A549 (cell line): ENCODE measurements at regions of chr16 and their contacts with region 1.

Region 1: GRCh38 chr16:25224731-25225319 is 8.1 kb downstream of the AQP8 start:
- DNase-seq: no peak
- ATAC-seq: no peak; a peak in 1 of 6 replicates
- H3K4me3 ChIP-seq: no peak overlapping the region
- H3K27ac ChIP-seq: no peak overlapping the region
- H3K4me1 ChIP-seq: no peaks in the 10 kb centered on the region
- CTCF ChIP-seq: no peak
- EP300 ChIP-seq: no peak
- POLR2A ChIP-seq: no peak
- RAD21 ChIP-seq: no peak

Region 2: DNA sequence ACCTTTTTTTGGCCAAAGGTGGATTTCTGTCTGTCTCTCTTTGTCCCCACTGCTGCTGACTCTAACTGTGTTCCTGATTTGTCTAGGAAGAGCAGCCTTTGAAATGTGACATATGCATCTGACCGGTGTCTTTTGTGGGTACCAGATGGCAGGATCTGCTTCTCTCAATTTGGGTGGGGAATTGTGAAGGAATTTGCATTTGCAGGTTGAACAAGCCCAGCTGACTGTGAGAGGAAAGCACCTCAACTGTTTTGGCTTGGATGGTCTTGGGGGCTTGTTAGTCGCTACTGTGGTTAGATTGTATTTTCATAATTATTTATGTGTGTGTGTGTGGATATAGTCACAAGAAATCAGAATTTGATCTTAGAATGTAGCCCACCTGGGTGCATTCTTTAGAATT is 151.0 kb before region 1 on chr16:
- CTCF ChIA-PET with region 1: no interaction called
- POLR2A ChIA-PET with region 1: no interaction called
- DNase-seq: no peak
- ATAC-seq: no peak
- H3K4me3 ChIP-seq: no peak overlapping the region
- H3K27ac ChIP-seq: no peak overlapping the region
- H3K4me1 ChIP-seq: no peaks in the 10 kb centered on the region
- CTCF ChIP-seq: no peak
- EP300 ChIP-seq: no peak
- POLR2A ChIP-seq: no peak
- RAD21 ChIP-seq: no peak

Region 3: DNA sequence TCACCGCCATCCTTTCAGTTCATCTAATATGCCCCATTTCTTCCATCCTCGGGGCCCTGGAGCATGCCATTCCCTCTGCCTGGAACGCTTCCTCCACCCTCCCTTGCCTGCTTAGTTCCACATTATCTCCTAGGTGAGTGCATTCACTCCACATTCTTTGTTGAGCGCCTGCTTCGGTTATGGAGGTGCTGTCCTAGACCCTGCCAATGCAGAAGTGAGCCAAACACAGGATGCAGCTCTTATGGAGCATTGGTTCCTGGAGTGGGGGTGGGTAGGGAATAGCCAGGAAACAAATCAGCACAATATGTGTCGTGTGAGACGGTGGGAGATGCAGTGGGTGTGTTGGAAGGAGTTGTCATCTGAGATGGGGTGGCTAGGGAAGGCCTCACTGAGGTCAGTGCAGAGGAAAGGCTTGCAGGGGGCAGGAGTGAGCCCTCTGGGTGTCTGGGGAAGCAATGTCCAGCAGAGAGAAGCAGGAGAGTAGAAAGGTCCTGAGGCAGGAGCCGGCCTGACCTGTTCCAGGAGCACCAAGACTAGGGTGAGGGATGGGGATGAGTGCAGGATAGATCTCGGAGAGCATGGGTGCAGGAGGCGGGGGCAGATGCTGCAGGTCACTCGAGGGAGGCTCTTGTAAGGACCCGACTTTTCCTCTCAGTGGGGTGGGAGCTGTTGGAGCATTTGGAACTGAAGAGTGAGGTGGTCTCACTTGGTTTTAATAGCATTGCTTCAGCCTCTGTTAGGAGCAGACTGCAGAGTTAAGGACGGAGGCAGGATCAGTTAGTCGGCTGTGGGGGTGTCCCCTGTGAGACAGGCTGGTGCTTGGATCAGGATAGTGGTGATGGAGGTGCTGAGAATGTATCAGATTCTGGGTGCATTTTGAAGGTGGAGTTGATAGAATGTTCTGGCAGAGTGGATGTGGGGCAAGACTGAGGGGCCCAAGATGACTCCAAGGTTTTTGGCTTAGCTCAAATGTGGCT is 106.3 kb before region 1 on chr16:
- CTCF ChIA-PET with region 1: interaction called, 10 read pairs
- POLR2A ChIA-PET with region 1: no interaction called
- DNase-seq: no peak
- ATAC-seq: no peak
- H3K4me3 ChIP-seq: no peak overlapping the region
- H3K27ac ChIP-seq: no peak overlapping the region
- H3K4me1 ChIP-seq: no peaks in the 10 kb centered on the region
- CTCF ChIP-seq: no peak
- EP300 ChIP-seq: no peak
- POLR2A ChIP-seq: no peak
- RAD21 ChIP-seq: no peak

Region 4: DNA sequence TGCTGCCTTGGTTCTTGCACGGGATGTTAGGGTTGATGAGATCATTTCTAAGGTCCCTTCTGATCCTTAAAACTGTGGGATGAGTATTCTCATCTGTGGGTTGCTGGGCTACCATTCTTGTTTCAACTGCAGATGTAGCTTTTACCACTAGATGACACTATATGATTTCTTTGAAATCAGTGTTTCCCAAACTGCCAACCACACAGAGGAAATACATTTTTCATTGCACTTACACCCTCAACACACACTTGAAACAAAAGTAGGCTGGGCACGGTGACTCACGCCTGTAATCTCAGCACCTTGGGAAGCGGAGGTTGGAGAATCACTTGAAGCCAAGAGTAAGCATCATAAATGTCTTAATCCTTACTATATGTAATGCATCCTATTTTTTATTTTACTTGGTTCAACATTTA is 98.0 kb before region 1 on chr16:
- CTCF ChIA-PET with region 1: interaction called, 30 read pairs
- POLR2A ChIA-PET with region 1: no interaction called
- DNase-seq: peak; percentile 60 to 65
- ATAC-seq: peak; percentile 84 to 92
- H3K4me3 ChIP-seq: no peak overlapping the region
- H3K27ac ChIP-seq: no peak overlapping the region
- H3K4me1 ChIP-seq: peaks cover 4% of the 10 kb centered on the region; the same call in 1 of the 3 replicates
- CTCF ChIP-seq: peak; percentile 73
- EP300 ChIP-seq: no peak
- POLR2A ChIP-seq: no peak
- RAD21 ChIP-seq: peak; percentile 71 to 83

Region 5: GRCh38 chr16:25138134-25138533 is 86.7 kb before region 1 on chr16:
- CTCF ChIA-PET with region 1: interaction called, 11 read pairs
- POLR2A ChIA-PET with region 1: no interaction called
- DNase-seq: no peak
- ATAC-seq: peak; percentile 49 to 59; a peak in 4 of 6 replicates
- H3K4me3 ChIP-seq: no peak overlapping the region
- H3K27ac ChIP-seq: no peak overlapping the region
- H3K4me1 ChIP-seq: no peaks in the 10 kb centered on the region
- CTCF ChIP-seq: no peak
- EP300 ChIP-seq: no peak
- POLR2A ChIP-seq: no peak
- RAD21 ChIP-seq: no peak

Region 6: GRCh38 chr16:25213709-25214397 is 11.0 kb before region 1 on chr16:
- CTCF ChIA-PET with region 1: interaction called, 11 read pairs
- POLR2A ChIA-PET with region 1: no interaction called
- DNase-seq: no peak
- ATAC-seq: no peak
- H3K4me3 ChIP-seq: no peak overlapping the region
- H3K27ac ChIP-seq: no peak overlapping the region
- H3K4me1 ChIP-seq: no peaks in the 10 kb centered on the region
- CTCF ChIP-seq: no peak
- EP300 ChIP-seq: no peak
- POLR2A ChIP-seq: no peak
- RAD21 ChIP-seq: no peak

Region 7: GRCh38 chr16:25235991-25236390 is 11.2 kb after region 1 on chr16:
- CTCF ChIA-PET with region 1: interaction called, 39 read pairs
- POLR2A ChIA-PET with region 1: no interaction called
- DNase-seq: no peak
- ATAC-seq: no peak
- H3K4me3 ChIP-seq: no peak overlapping the region
- H3K27ac ChIP-seq: no peak overlapping the region
- H3K4me1 ChIP-seq: no peaks in the 10 kb centered on the region
- CTCF ChIP-seq: no peak
- EP300 ChIP-seq: no peak
- POLR2A ChIP-seq: no peak
- RAD21 ChIP-seq: no peak